Prostate gland (tissue), 2 donors: ENCODE measurements at regions of chr3 and their contacts with region 1.

Region 1: GRCh38 chr3:73451306-73451944 is 173.3 kb downstream of the PDZRN3 start:
- DNase-seq: peak; percentile 68
- H3K4me3 ChIP-seq: no peak overlapping the region
- H3K27ac ChIP-seq: peak overlapping the region; percentile 33 to 59
- H3K4me1 ChIP-seq: peaks cover 9% of the 10 kb centered on the region
- H3K27me3 ChIP-seq: no peaks in the 10 kb centered on the region
- CTCF ChIP-seq: no peak
- POLR2A ChIP-seq: no peak

Region 2: DNA sequence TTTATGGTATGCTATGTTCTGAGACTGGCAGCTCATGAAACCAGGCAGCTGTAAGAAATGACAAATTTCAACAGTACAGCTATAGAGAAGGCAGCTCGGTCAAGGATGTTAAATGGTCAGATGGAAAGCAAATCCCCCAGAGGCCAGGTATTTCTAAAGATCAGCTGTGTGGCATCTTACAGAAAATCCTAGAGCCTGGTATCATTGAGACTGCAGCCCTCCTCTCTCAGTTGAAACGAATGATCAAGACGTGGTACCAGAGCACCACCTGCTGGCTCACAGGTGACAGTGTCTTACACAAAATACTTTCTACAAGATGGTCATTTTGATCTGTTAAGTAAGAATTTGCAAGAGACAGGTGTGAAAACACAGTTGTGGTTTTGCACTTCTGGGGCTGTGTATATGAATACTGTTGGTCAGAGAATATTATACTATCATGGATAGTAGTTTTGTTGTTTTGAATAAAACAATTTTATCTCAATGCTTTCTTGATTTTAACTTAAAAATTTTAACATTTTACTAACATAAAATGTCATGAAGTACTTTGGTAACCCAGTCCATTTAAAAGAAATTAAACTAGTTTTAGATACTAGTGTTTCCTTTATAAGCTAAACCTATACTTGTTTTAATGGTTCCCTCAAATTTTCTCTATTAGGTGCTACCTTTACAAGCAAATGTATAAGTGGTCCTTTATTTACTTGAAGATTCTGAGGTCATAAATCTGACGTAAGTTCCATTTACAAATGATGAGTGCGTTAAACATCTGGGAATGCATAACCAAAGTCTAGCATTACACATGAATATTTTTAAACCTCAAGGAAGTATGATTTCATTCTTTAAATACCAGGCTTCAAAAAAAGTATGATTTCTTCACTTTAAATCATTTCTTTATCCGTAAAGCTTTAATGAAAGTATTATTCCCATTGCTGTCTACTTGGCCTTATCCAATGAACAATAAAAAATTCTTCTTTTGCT is 51.5 kb after region 1 on chr3:
- intact Hi-C with region 1: loop called (anchors 5 kb)
- DNase-seq: peak; percentile 77
- H3K4me3 ChIP-seq: no peak overlapping the region
- H3K27ac ChIP-seq: peak overlapping the region; percentile 66
- H3K4me1 ChIP-seq: peaks cover 15% of the 10 kb centered on the region
- H3K27me3 ChIP-seq: no peaks in the 10 kb centered on the region
- CTCF ChIP-seq: peak; percentile 68 to 91 (median 80)
- POLR2A ChIP-seq: no peak

Region 3: DNA sequence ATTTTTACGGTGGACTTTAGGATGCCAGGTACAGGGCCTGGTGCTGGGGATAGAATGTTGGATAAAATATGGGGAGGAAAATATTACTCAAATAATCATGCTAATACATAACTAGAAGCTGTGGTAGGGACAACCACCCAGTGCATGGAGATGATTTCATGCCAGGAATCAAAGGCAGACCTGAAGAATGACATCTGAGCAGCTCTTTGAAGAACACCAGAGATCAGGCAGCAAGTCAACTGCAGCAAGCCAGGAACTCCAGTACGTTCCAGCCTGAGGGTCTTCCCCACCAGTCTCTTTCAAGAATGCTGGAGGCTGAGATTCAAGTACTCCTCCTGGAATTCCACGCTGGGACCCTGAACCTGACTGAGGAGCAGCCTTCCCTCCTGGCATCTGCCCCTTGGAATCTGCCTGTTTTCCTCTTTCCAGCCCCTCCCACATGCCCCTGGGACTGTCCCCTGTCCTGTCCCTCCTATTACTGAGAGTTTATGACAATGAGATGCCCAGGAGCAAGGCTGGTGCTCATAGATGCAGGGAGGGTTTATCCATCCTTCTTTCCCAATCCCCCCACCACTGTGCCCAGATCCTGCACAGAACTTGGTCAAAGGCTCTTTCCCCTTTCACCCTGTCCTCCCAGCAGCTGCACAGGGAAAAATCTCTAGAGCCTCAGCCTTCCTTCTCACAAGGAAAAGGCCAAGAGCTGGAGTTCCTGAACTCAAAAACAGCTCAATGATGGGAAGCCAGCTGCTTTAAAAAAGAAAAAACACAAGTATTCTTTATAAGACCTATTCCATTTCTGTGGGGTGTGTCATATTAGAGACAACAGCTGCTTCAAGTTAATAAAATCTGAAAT is 105.3 kb after region 1 on chr3:
- intact Hi-C with region 1: no loop called
- DNase-seq: no peak
- H3K4me3 ChIP-seq: no peak overlapping the region
- H3K27ac ChIP-seq: peak overlapping the region; percentile 38 to 42
- H3K4me1 ChIP-seq: peaks cover 5% of the 10 kb centered on the region
- H3K27me3 ChIP-seq: no peaks in the 10 kb centered on the region
- CTCF ChIP-seq: no peak
- POLR2A ChIP-seq: no peak